ENCODE measurements at regions of chr12 and their contacts with region 1.

Region 1: GRCh38 chr12:69738351-69739286 is at the start of gene RAB3IP:
- DNase-seq: peak; percentile 94
- ATAC-seq: peak; percentile 93
- H3K4me3 ChIP-seq: peak within 1 kb of the TSS; percentile 63 to 77 (median 70)
- H3K4me3 Mint-ChIP-seq: peak within 1 kb of the TSS; percentile 87
- H3K27ac ChIP-seq: peak within 1 kb of the TSS; percentile 57 to 91
- H3K27ac Mint-ChIP-seq: peak within 1 kb of the TSS; percentile 76
- H3K4me1 ChIP-seq: peaks cover 11 to 15% of the 10 kb centered on the region in 2 donors
- H3K4me1 Mint-ChIP-seq: peaks cover 11% of the 10 kb centered on the region
- H3K27me3 ChIP-seq: peaks cover 0 to 6% (median 0%) of the 10 kb centered on the region in 4 experiments
- H3K27me3 Mint-ChIP-seq: peaks cover 12% of the 10 kb centered on the region
- CTCF ChIP-seq: peak; percentile 79
- total RNA-seq, gene RAB3IP: 37.9 and 38.4 TPM in 2 replicates

Region 2: DNA sequence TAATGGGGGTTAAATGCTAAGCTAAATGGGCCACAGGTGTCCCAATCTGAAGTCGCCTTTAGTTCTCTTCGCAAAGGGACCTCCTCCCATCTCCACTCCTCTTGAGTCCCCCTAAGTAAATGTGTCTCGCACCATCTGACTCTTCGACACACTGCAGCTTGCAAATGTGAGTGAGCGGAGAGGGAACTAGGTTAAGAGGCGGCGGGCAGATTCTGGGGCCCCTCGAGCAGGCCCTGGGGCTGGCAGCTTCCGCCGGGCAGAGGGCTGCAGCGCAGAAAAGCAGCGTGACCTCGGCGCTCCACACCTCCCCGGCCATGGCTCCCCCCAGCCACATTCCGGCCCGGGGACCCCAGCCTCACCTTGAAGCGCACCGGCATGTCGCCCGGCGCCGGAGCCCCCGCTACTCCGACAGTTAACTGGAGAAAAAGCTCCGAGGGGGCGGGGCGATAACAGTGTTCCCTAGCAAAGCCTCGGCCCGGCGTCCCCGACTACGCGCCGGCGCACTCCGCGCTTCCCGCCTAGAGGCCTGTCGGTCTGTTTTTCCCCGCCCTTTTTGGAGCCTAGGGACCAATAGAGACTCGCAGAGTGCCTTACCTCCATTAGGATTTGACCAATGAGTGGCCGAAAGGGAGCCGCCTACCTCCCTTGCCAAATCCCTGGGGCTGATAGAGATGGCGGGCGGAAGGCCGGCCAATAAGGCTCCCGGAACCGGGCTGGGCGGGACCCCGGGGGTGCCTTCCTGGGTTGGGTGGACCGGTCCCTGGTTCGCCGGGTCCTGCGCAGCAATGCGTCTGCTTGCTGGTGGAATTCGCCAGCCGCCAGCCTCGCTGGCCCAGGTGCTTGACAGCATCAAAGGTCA is 1406.5 kb before region 1 on chr12 and contains the start of gene MDM1:
- CTCF ChIA-PET with region 1: no interaction called
- POLR2A ChIA-PET with region 1: no interaction called
- intact Hi-C with region 1: loop called (anchors 5 kb)
- DNase-seq: peak; percentile 97
- ATAC-seq: peak; percentile 97
- H3K4me3 ChIP-seq: peak within 1 kb of the TSS; percentile 79 to 85 (median 82)
- H3K4me3 Mint-ChIP-seq: peak within 1 kb of the TSS; percentile 94
- H3K27ac ChIP-seq: peak within 1 kb of the TSS; percentile 55 to 78
- H3K27ac Mint-ChIP-seq: peak within 1 kb of the TSS; percentile 90
- H3K4me1 ChIP-seq: peaks cover 12 to 14% of the 10 kb centered on the region in 2 donors
- H3K4me1 Mint-ChIP-seq: peaks cover 40% of the 10 kb centered on the region
- H3K27me3 ChIP-seq: no peaks in the 10 kb centered on the region
- H3K27me3 Mint-ChIP-seq: no peaks in the 10 kb centered on the region
- CTCF ChIP-seq: no peak
- total RNA-seq, gene MDM1: 38.3 and 38.9 TPM in 2 replicates

Region 3: DNA sequence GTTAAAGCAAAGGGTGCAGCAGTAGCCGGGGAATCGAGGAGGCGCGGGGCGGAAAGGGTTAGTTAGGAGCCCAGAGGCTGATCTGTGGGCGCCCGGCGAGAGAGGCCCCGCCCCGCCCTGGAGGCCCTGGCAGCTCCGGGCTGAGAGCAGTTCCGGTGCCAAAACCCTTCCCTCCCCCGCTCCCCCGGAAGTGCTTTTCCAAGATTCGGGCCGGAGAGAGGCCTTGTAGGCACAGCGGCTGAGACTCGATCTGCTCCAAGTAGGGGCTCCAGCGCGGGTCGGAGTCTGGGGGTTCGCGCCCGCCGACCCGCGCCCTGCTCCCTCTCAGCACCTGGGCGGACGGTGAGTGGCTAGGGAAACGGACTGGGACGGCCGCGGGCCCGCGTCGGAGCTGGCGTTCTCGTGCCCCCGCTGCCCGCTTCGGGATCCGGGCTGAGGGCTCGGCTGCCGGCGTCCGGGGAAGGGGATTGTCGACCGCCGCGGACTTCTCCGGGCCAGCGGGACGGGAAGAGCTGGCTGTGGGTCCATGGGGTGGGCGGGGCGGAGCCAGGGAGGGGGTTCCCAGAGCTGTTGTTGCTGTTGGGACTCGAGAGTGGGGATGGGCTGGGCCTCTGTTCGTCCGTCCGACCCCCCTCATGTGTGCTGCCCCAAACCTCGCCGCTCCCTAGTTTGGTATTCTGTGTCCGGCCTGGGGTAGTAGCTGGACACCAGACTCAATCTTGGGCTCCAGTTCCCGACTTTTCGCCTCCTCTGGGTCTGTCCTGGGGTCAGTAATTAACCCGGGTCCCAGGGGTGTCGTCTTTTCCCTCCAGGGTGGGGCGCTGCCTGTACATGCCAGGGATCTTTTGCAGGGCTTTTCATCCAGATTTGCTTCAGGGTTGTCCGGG is 268.2 kb before region 1 on chr12 and contains the start of gene FRS2:
- CTCF ChIA-PET with region 1: no interaction called
- POLR2A ChIA-PET with region 1: no interaction called
- intact Hi-C with region 1: loop called (anchors 2 kb)
- DNase-seq: peak; percentile 84
- ATAC-seq: peak; percentile 94
- H3K4me3 ChIP-seq: peak within 1 kb of the TSS; percentile 48 to 99 (median 96)
- H3K4me3 Mint-ChIP-seq: peak within 1 kb of the TSS; percentile 98
- H3K27ac ChIP-seq: peak within 1 kb of the TSS; percentile 78 to 94
- H3K27ac Mint-ChIP-seq: peak within 1 kb of the TSS; percentile 97
- H3K4me1 ChIP-seq: peaks cover 44 to 56% of the 10 kb centered on the region in 2 donors
- H3K4me1 Mint-ChIP-seq: peaks cover 70% of the 10 kb centered on the region
- H3K27me3 ChIP-seq: no peaks in the 10 kb centered on the region
- H3K27me3 Mint-ChIP-seq: no peaks in the 10 kb centered on the region
- CTCF ChIP-seq: no peak
- total RNA-seq, gene FRS2: 29.5 and 33.7 TPM in 2 replicates

Region 4: GRCh38 chr12:70242695-70243509 is 504.3 kb after region 1 on chr12 and contains the start of gene CNOT2:
- CTCF ChIA-PET with region 1: no interaction called
- POLR2A ChIA-PET with region 1: no interaction called
- intact Hi-C with region 1: loop called (anchors 5 kb)
- DNase-seq: peak; percentile 93
- ATAC-seq: peak; percentile 88
- H3K4me3 ChIP-seq: peak within 1 kb of the TSS; percentile 75 to 92 (median 85)
- H3K4me3 Mint-ChIP-seq: peak within 1 kb of the TSS; percentile 96
- H3K27ac ChIP-seq: peak within 1 kb of the TSS; percentile 95 to 98
- H3K27ac Mint-ChIP-seq: peak within 1 kb of the TSS; percentile 97
- H3K4me1 ChIP-seq: peaks cover 20 to 33% of the 10 kb centered on the region in 2 donors
- H3K4me1 Mint-ChIP-seq: peaks cover 57% of the 10 kb centered on the region
- H3K27me3 ChIP-seq: no peaks in the 10 kb centered on the region
- H3K27me3 Mint-ChIP-seq: no peaks in the 10 kb centered on the region
- CTCF ChIP-seq: no peak
- total RNA-seq, gene CNOT2: 115 and 120 TPM in 2 replicates

Region 5: GRCh38 chr12:71685914-71686665 is 1947.5 kb after region 1 on chr12 and contains the start of gene TMEM19:
- CTCF ChIA-PET with region 1: no interaction called
- POLR2A ChIA-PET with region 1: no interaction called
- intact Hi-C with region 1: loop called (anchors 5 kb)
- DNase-seq: peak; percentile 94
- ATAC-seq: peak; percentile 91
- H3K4me3 ChIP-seq: peak within 1 kb of the TSS; percentile 70 to 99 (median 81)
- H3K4me3 Mint-ChIP-seq: peak within 1 kb of the TSS; percentile 97
- H3K27ac ChIP-seq: peak within 1 kb of the TSS; percentile 83 to 95
- H3K27ac Mint-ChIP-seq: peak within 1 kb of the TSS; percentile 96
- H3K4me1 ChIP-seq: peaks cover 53 to 54% of the 10 kb centered on the region in 2 donors
- H3K4me1 Mint-ChIP-seq: peaks cover 49% of the 10 kb centered on the region
- H3K27me3 ChIP-seq: no peaks in the 10 kb centered on the region
- H3K27me3 Mint-ChIP-seq: no peaks in the 10 kb centered on the region
- CTCF ChIP-seq: no peak
- total RNA-seq, gene TMEM19: 39.4 and 45.5 TPM in 2 replicates

Measured in B cell (primary cell).